Activated T-helper 2 cell treated with anti-CD3 and anti-CD28 coated beads, Interferon-gamma antibody, Interleukin-2, Interleukin-4, amounts not matched to agents 10 μg/mL and 5 μg/mL and 100 μg/mL, durations not matched to agents 14 hours and 24 hours and 36 hours (primary cell): ENCODE measurements at regions of chr4 and their contacts with region 1.

Region 1: DNA sequence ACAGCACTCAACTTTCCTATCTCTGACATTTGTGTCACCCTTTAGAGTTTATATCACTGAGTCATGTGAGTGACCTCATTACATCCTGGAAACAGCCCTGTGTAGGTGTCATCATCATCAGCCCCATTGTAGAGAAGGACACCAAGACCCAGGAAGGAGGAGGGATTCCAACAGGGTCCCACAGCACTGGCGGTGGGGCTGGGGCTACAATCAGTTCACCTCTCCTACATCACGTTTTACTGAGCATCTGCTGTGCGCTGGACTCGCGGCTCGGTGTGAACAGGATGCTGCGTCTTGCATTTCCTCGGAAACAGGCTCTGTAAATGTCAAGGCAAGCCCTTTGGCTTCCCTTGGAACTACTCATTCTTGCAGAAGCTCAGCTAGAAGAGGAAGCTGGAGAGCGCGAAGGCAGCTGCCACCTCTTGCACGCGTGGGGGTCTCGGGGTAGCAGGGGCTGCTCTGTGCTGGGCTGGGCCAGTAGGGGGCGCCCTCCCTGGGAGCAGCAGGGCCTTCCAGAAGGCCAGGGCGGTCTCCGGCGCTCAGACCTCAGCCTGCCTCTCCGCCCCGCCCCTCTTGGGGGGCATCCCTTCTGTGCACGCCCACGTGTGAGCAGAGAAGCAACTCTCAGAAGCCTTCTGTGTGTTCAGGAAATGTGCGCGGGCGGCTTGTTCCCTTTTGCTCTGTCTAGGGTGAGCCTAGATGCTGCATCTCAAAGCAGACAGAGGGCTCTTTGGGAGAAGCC is 29.0 kb downstream of the REELD1 start:
- DNase-seq: peak; percentile 15
- H3K4me3 Mint-ChIP-seq: peak overlapping the region; percentile 71
- H3K27ac Mint-ChIP-seq: peak overlapping the region; percentile 96
- H3K4me1 Mint-ChIP-seq: peaks cover 54% of the 10 kb centered on the region
- H3K27me3 Mint-ChIP-seq: peaks cover 2% of the 10 kb centered on the region

Region 2: GRCh38 chr4:145936142-145936996 is 306.9 kb before region 1 on chr4:
- intact Hi-C with region 1: loop called (anchors 1 kb)
- DNase-seq: peak; percentile 58
- H3K4me3 Mint-ChIP-seq: peak overlapping the region; percentile 94
- H3K27ac Mint-ChIP-seq: peak overlapping the region; percentile 96
- H3K4me1 Mint-ChIP-seq: peaks cover 44% of the 10 kb centered on the region
- H3K27me3 Mint-ChIP-seq: no peaks in the 10 kb centered on the region

Region 3: DNA sequence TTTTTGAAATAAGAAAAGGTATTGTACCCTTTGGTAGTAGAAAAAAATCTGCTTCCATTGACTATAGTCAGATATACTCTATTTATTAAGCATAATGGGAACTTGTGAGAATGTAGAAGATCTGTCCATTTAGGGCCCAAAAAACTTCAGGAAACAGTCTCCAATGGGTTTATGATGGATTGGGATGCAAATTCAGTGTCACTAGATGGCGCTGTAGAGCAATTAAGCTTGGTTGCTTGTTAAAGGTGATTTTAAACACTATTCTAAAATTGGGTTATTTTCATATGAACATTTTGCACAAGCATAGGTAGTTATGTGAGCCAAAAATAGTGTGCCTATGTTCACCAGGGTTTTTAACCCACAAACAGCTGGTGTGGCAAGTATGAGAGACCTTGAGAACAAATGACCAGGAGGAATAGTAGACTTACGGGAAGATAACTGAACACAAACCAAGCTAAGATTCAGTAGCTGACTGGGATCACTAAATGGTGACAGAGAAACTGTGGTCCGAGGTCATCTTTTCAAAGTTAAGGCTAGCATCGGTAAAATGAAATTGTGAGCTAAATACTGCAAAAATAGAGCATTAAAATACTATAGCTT is 148.1 kb before region 1 on chr4:
- intact Hi-C with region 1: no loop called
- DNase-seq: no peak
- H3K4me3 Mint-ChIP-seq: no peak overlapping the region
- H3K27ac Mint-ChIP-seq: no peak overlapping the region
- H3K4me1 Mint-ChIP-seq: peaks cover 5% of the 10 kb centered on the region
- H3K27me3 Mint-ChIP-seq: peaks cover 17% of the 10 kb centered on the region

Region 4: DNA sequence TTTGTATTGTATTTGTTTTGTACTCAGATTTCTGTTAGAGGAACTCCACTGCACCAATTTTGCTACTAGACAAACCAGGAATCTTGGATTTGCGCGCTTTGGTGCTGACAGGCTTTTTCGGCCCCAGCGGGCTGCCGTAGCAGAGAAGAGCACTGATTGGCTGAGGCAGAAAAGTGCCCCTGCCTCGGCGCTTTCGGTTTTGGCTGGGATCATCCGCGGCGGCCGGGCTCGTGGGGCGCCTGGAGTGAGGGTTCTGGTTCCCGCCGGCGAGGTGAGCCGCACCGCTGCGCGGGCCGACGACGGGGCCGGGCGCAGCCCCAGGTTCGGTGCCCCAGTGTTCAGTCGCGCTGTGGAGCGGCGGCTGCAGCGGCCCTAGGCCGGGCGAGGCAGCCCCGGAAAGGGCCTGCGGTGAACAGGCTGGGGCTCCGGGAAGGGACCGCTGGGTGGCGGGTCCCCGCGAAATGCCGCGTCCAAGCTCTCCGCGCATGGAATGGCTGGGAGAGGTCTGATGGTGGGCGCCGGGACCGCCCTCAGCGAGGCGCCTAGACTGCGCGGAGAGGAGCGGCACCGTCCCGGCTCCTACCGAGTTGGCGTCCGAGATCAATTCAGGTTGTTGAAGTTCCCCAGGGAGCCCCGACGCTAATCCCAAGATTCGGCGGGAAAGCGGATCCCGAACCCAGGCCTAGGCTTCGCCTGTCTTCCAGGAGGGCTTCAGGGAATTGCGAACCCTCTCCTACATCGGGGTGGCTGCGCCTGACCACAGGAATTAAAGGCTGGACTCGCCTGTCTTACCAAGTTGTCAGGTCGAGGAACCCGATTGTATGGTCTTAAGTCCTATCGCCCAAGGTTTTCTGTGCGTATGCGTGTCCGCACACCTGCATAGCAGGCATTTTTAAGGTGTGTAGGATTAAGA is 67.5 kb before region 1 on chr4 and contains the start of gene LSM6:
- intact Hi-C with region 1: loop called (anchors 1 kb)
- DNase-seq: peak; percentile 78
- H3K4me3 Mint-ChIP-seq: peak within 1 kb of the TSS; percentile 86
- H3K27ac Mint-ChIP-seq: peak within 1 kb of the TSS; percentile 71
- H3K4me1 Mint-ChIP-seq: peaks cover 37% of the 10 kb centered on the region
- H3K27me3 Mint-ChIP-seq: no peaks in the 10 kb centered on the region
- total RNA-seq, gene LSM6: 67.2 and 74.1 TPM in 2 replicates

Region 5: GRCh38 chr4:146333187-146333894 is 90.0 kb after region 1 on chr4:
- intact Hi-C with region 1: loop called (anchors 1 kb)
- DNase-seq: no peak
- H3K4me3 Mint-ChIP-seq: no peak overlapping the region
- H3K27ac Mint-ChIP-seq: no peak overlapping the region
- H3K4me1 Mint-ChIP-seq: no peaks in the 10 kb centered on the region
- H3K27me3 Mint-ChIP-seq: no peaks in the 10 kb centered on the region

Region 6: GRCh38 chr4:146522098-146522868 is 279.0 kb after region 1 on chr4:
- intact Hi-C with region 1: loop called (anchors 1 kb)
- DNase-seq: peak; percentile 80
- H3K4me3 Mint-ChIP-seq: no peak overlapping the region
- H3K27ac Mint-ChIP-seq: no peak overlapping the region
- H3K4me1 Mint-ChIP-seq: peaks cover 28% of the 10 kb centered on the region
- H3K27me3 Mint-ChIP-seq: no peaks in the 10 kb centered on the region

Region 7: DNA sequence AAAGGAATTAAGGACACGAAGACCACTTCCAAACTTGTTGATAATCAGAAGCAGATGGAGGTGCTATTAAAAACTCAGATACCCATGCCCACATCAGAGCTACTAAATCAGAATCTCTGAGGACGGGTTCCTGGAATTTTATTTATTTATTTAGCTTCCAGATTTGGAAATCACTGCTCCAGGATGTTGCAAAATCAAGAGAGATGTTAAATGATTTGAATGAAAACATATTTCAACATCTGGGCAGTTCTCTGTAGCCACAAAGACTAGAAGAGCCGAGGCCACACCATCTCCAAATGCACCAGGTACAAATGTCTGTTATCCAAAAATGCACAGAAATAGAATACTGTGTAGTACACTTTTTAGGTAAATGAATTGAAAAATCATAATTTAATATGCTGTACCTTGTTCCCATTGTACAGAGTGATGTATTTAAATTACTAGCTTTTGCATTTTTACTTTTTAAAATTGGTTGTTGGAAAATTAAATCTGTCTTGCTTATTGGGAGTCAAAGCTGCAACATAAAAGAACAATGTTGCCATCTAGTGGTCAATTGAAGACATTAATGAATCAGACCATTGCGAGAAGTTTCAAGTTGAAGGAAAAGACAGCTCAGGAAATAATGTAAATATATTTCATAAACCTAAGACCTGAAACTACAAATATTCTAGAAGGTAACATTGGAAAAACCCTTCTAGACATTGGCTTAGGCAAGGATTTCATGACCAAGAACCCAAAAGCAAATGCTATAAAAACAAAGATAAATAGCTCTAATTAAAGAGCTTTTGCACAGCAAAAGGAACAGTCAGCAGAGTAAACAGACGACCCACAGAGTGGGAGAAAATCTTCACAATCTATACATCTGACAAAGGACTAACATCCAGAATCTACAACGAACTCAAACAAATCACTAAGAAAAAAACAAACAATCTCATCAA is 853.6 kb after region 1 on chr4:
- intact Hi-C with region 1: loop called (anchors 2 kb)
- DNase-seq: no peak
- H3K4me3 Mint-ChIP-seq: no peak overlapping the region
- H3K27ac Mint-ChIP-seq: no peak overlapping the region
- H3K4me1 Mint-ChIP-seq: no peaks in the 10 kb centered on the region
- H3K27me3 Mint-ChIP-seq: no peaks in the 10 kb centered on the region